OCI-LY7 (cell line): ENCODE measurements at regions of chr2 and their contacts with region 1.

Region 1: DNA sequence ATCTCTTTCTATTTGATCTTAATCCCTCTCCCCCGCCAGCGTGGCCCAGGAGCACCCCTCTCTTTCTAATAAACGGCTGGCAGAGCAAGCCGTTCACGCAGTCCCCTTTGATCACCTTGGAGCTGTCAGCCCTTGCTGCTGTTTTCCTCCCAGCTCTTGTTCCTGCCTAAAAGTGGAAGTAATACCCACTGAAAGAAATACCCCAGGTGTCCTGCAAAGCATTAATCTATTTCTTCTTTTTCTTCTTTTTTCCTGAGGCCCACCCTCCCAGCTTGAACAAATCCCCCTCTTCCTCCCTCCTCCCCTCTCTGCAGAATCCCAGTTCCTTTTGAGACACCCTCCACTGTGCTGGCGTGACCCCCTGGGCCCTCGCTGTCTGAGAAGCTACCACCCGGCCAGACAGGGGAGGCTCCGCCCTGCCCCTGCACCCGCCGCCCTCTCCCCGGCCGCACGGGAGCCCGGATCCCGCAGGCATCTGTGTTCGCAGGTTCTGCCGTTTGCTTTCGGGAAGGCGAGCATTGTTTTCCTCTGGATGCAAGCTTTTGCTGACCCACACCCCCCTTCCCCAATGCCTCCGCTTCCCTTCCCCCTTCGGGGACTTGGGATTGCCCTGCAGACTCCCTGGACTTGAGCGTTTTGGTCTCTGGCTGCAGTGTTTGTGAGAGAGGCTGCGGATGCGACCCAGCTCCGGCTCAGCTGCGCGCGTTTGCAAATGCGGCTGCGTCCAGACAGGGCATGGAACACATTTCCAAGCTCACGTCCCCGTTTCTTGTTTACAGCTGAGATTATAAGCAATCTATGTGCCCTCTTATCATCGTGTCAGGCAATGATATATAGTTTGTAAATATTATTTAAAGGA is 631.5 kb downstream of the NYAP2 start:
- DNase-seq: no peak
- H3K4me3 ChIP-seq: no peak overlapping the region
- H3K27ac ChIP-seq: no peak overlapping the region
- H3K4me1 ChIP-seq: no peaks in the 10 kb centered on the region
- CTCF ChIP-seq: no peak

Region 2: DNA sequence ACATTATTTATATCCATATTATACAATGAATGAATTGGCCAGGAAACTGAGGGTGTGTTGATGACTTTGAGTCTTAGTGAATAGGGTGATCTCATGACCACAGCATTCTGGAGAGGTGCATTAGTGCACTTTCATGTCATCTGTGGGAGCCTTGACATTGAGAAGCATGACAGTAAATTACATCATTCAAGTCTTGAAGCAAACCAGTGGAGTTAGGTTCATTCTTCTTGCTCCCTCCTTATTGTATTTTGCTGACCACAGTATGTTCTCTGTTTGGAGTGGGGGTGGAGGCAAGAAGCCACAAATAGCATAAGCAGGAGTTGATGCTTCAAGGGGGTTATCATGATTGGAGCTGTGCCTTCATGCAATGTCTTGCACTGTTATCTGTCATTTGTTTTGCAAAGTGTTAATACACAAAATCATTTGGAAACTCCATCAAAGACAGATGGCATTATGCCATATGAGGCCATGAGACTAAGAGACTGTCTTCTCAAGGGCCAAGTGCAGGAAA is 48.7 kb after region 1 on chr2:
- CTCF ChIA-PET with region 1: no interaction called
- POLR2A ChIA-PET with region 1: no interaction called
- intact Hi-C with region 1: loop called (anchors 2 kb)
- DNase-seq: no peak
- H3K4me3 ChIP-seq: no peak overlapping the region
- H3K27ac ChIP-seq: no peak overlapping the region
- H3K4me1 ChIP-seq: no peaks in the 10 kb centered on the region
- CTCF ChIP-seq: no peak